ENCODE measurements at regions of chr3 and their contacts with region 1.

Region 1: DNA sequence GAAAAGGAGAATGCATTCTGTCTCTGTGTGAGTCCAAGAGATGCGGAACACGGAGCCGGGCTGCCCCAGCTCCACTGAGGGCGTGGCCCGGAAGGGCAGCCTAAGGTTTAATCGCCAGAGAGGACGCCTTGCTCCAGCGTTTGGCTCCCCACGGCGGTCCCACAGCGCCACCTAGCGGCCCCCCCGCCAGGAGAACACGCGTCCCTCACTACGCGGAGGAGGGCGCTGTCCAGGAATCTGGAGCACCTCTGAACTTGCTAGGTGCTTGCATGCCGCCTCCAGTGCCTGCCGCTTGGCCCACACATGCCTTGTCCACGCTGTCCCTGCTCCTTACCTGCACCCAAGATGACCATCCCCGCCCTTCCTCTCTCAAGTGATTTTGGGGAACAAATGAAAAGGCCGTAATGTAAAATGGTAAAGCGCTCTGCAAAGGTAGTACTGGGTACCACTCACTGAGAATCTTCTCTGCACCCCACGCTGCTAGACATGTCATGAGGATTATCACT is 14.4 kb upstream of the MRPS22 start:
- DNase-seq: peak; percentile 92
- ATAC-seq: peak; percentile 95

Region 2: DNA sequence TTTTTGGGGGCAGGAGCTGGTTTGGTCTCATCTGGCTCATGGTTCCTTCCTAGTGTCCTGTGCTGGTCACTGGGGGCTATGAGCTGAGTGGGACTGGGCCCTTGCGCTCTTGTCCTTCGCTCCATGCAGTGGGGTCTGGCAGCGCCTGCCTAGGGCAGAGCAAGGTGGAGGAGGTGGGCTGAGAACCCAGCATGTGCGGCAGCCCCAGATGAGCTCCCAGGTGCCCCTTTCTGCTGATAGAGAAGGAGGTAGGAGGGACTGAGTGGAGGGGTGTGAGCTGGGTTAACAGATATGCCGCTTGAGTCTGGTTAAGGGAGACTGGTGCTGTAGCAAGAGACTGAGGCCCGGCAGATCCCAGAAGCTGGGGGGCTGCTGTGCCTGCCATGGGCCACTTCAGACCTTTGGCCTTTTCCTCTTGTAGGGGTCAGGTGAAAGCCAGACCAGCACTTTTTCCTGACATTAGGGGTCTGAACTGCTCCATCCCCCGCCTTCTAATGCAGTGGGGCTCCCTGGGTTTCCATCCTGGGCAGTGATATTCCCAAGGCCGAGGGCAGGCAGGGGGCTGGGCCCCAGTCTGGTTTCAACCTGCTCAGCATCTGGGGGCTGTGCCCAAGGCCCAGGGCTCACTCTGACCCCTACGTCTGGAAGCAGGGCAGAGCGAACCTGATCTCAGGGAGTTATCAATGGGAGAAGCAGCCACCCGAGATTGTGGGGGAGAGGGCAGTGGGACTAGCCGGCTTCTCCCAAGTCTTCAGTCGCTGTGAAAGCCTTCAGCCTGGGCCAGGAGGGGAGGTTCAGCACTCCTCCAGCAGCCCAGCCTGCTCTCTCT is 221.8 kb before region 1 on chr3:
- intact Hi-C with region 1: loop called (anchors 5 kb)
- DNase-seq: no peak
- ATAC-seq: no peak

Region 3: GRCh38 chr3:139187650-139188049 is 141.7 kb before region 1 on chr3:
- intact Hi-C with region 1: no loop called
- DNase-seq: no peak
- ATAC-seq: no peak